Activated T-helper 2 cell treated with anti-CD3 and anti-CD28 coated beads, Interferon-gamma antibody, Interleukin-2, Interleukin-4, amounts not matched to agents 10 μg/mL and 5 μg/mL and 100 μg/mL, durations not matched to agents 14 hours and 24 hours and 36 hours (primary cell): ENCODE measurements at regions of chr1 and their contacts with region 1.

Region 1: DNA sequence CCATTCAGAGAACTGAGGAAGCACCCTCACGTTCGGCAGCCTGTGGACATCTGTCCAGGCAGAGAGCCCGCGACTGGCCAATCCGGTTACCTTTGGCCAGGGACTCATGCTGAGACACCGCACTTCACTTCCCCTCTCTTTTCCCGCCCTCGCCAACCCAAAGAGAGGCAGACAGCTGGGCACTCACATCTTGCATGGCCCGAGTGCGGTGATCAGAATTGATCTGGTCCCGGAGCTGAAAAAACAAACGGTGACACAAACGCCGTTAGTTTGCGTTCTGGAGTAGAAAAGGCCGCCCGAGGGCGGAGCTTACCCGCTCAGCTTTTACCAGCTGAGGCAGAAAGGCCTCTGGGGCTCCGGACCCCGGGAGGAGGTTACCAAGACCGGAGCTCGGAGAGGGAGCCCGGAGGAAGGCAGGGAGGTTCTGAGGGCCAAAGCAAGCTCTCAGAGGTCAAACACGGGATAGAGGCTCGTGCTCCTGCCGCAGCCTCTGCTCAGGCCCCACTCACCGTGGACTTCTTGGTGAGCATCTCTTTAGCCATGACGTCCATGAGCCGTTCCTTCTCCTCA is 376 bp downstream of the SF3A3 start:
- DNase-seq: peak; percentile 48
- H3K4me3 Mint-ChIP-seq: peak overlapping the region; percentile 99
- H3K27ac Mint-ChIP-seq: peak overlapping the region; percentile 95
- H3K4me1 Mint-ChIP-seq: peaks cover 16% of the 10 kb centered on the region
- H3K27me3 Mint-ChIP-seq: no peaks in the 10 kb centered on the region

Region 2: GRCh38 chr1:38012363-38013226 is 23.1 kb after region 1 on chr1 and contains the start of gene UTP11:
- intact Hi-C with region 1: loop called (anchors 1 kb)
- DNase-seq: peak; percentile 90
- H3K4me3 Mint-ChIP-seq: peak within 1 kb of the TSS; percentile 95
- H3K27ac Mint-ChIP-seq: peak within 1 kb of the TSS; percentile 92
- H3K4me1 Mint-ChIP-seq: peaks cover 45% of the 10 kb centered on the region
- H3K27me3 Mint-ChIP-seq: no peaks in the 10 kb centered on the region
- total RNA-seq, gene UTP11: 78.8 and 79.0 TPM in 2 replicates

Region 3: GRCh38 chr1:38018864-38019343 is 29.5 kb after region 1 on chr1:
- intact Hi-C with region 1: loop called (anchors 1 kb)
- DNase-seq: no peak
- H3K4me3 Mint-ChIP-seq: no peak overlapping the region
- H3K27ac Mint-ChIP-seq: peak overlapping the region; percentile 22
- H3K4me1 Mint-ChIP-seq: peaks cover 18% of the 10 kb centered on the region
- H3K27me3 Mint-ChIP-seq: no peaks in the 10 kb centered on the region